ENCODE measurements at regions of chr2 and their contacts with region 1.

Region 1: DNA sequence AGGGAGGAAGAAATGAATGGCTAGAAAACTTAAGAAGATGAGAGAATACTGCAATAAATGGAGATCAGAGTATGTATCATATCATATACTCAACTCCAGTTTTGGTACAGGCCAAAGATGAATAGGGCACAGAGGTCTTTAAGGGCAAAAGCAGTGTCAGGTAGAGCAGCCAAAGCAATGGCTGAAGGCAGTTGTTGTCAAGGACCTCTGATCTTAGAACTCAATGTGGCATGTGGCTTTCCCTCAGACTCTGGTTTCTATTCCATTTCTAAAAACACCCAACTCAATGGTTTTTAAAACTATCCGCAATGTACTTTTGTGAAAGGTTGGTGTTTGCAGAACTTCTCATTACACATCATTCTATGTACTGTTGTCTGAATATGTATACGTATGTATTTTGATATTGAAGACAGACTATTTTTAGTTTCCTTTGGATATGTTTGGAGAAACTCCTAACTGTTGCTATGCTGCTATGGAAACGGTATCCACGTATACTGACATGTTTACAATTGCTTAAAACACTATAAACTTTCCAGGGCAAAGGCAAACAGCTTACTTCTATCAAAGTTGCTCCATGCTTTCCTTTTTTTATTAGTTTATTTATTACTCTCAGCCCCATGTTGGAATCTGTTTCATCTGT is 58.1 kb upstream of the PELI1 start:
- DNase-seq: peak; percentile 74
- H3K4me3 ChIP-seq: no peak overlapping the region
- H3K27ac ChIP-seq: peak overlapping the region; percentile 63
- H3K27me3 ChIP-seq: peaks cover 2% of the 10 kb centered on the region
- CTCF ChIP-seq: no peak

Region 2: GRCh38 chr2:63903003-63903402 is 299.3 kb before region 1 on chr2:
- CTCF ChIA-PET with region 1: no interaction called
- POLR2A ChIA-PET with region 1: no interaction called
- DNase-seq: no peak
- H3K4me3 ChIP-seq: no peak overlapping the region
- H3K27ac ChIP-seq: no peak overlapping the region
- H3K27me3 ChIP-seq: no peaks in the 10 kb centered on the region
- CTCF ChIP-seq: no peak

Region 3: GRCh38 chr2:64220265-64220664 is 17.9 kb after region 1 on chr2:
- CTCF ChIA-PET with region 1: interaction called, 3 read pairs
- POLR2A ChIA-PET with region 1: interaction called, 10 read pairs
- DNase-seq: no peak
- H3K4me3 ChIP-seq: no peak overlapping the region
- H3K27ac ChIP-seq: no peak overlapping the region
- H3K27me3 ChIP-seq: peaks cover 24% of the 10 kb centered on the region
- CTCF ChIP-seq: no peak